ENCODE measurements at regions of chr6 and their contacts with region 1.

Region 1: GRCh38 chr6:26270903-26271667 is 93.9 kb upstream of the BTN3A2 start:
- DNase-seq: peak; percentile 86
- H3K4me3 Mint-ChIP-seq: no peak overlapping the region
- H3K27ac Mint-ChIP-seq: no peak overlapping the region
- H3K4me1 Mint-ChIP-seq: peaks cover 39% of the 10 kb centered on the region
- H3K27me3 Mint-ChIP-seq: no peaks in the 10 kb centered on the region

Region 2: DNA sequence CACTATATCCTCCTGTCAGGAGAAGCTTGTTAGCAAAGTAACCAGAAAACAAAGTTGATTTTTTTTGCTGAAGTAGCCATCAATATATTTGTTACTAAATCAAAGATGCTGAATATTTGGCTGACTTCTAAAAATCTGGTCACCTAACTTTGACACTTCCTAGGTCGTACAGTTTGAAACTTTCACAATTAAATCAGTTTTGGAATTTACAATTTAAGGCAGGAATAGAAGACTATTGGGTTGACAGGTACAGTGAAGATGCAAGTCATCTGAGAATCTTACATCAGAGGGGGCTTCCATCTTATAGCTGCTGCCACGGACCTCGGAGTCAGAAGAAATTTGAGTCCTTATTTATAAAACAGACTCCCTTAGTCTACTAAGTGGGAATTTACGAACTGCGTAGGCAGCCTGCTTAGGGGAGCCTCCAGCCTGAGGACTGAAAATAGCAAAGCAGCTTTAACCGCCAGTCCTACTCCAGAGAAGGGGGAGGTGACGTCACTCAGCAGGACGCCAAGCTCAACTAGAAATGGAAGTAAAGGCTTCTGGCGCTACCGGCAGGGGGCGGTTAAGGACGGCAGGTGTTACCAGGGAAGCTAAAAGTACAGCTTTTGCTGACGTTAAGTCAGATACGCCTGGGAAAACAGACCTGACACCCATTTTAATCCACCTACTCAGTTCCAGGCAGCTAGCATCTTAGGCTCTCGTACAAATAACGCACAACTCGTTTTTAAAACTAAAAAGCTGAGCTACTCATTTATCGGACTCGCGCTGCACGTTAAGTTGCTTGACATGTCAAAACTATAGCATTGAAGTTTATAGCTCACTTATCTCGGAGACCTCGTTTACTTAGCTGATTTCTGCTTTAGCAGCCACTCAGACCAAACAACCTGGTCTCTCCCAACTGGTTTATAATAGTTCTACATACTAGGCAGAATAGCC is 244.9 kb before region 1 on chr6:
- CTCF ChIA-PET with region 1: no interaction called
- DNase-seq: peak; percentile 98
- H3K4me3 Mint-ChIP-seq: peak overlapping the region; percentile 77
- H3K27ac Mint-ChIP-seq: peak overlapping the region; percentile 99
- H3K4me1 Mint-ChIP-seq: peaks cover 80% of the 10 kb centered on the region
- H3K27me3 Mint-ChIP-seq: no peaks in the 10 kb centered on the region

Region 3: GRCh38 chr6:26130254-26131249 is 140.5 kb before region 1 on chr6:
- CTCF ChIA-PET with region 1: no interaction called
- DNase-seq: no peak
- H3K4me3 Mint-ChIP-seq: no peak overlapping the region
- H3K27ac Mint-ChIP-seq: no peak overlapping the region
- H3K4me1 Mint-ChIP-seq: peaks cover 39% of the 10 kb centered on the region
- H3K27me3 Mint-ChIP-seq: peaks cover 3% of the 10 kb centered on the region

Region 4: DNA sequence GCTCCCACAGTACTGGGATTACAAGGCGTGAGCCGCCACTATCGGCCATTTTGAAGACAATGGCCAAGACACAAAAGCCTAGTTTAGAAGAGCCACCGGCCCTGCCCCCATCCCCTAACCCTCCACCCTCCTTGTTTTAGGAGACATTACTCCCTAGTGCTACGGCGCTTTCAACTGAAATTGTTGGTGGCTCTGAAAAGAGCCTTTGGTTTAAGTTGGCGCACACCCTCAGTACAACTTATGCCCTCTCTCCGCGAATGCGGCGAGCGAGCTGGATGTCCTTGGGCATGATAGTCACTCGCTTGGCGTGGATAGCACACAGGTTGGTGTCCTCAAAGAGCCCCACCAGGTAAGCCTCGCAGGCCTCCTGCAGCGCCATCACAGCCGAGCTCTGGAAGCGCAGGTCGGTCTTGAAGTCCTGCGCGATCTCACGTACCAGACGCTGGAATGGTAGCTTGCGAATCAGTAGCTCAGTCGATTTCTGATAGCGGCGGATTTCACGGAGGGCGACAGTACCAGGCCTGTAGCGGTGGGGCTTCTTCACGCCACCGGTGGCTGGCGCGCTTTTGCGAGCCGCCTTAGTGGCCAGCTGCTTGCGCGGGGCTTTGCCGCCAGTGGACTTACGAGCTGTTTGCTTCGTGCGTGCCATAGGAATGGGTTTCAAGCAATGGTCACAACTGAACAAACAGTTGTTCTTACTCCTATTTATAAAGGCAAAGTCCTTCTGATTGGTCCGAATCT is 21.0 kb before region 1 on chr6:
- CTCF ChIA-PET with region 1: interaction called, 22 read pairs
- DNase-seq: peak; percentile 88
- H3K4me3 Mint-ChIP-seq: peak overlapping the region; percentile 88
- H3K27ac Mint-ChIP-seq: peak overlapping the region; percentile 99
- H3K4me1 Mint-ChIP-seq: peaks cover 39% of the 10 kb centered on the region
- H3K27me3 Mint-ChIP-seq: no peaks in the 10 kb centered on the region

Region 5: GRCh38 chr6:26258200-26258977 is 12.7 kb before region 1 on chr6:
- CTCF ChIA-PET with region 1: interaction called, 12 read pairs
- DNase-seq: no peak
- H3K4me3 Mint-ChIP-seq: no peak overlapping the region
- H3K27ac Mint-ChIP-seq: no peak overlapping the region
- H3K4me1 Mint-ChIP-seq: peaks cover 24% of the 10 kb centered on the region
- H3K27me3 Mint-ChIP-seq: peaks cover 4% of the 10 kb centered on the region